Adrenal gland (tissue), 19 donors: ENCODE measurements at regions of chr5 and their contacts with region 1.

Region 1: DNA sequence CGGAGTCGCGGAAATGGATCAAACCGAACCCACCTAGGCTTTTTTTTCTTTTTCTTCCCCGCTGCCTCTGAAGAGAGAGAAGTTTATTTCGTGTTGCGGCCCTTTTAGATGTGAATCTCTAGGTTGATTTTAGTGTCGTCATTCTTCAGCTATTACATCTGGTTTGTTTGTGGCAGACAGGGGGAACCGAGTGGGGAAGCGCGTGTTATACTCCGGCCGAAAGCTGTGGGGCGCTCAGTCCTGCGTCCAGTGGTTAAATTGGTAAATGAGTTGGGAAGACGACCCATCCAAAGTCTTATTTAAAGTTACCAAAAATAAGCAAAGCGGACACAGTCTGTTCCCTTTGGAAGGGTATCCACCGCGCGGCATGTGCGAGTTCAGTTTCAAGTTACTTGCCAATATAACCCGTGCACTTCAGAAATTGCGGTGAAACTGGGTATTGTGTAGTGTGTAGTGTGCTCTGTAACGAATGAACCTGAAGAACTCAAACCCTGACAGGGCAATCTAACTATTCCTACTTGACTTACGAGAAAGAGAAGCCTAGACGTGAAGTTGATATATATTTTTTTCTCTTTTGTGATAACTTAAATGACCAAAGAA is 1.3 kb downstream of the MAN2A1 start:
- DNase-seq: peak; percentile 79 to 92 (median 84)
- H3K4me3 ChIP-seq: peak overlapping the region; percentile 30 to 97 (median 56)
- H3K27ac ChIP-seq: peak overlapping the region; percentile 37 to 98 (median 94)
- H3K4me1 ChIP-seq: peaks cover 37 to 47% of the 10 kb centered on the region in 2 donors
- H3K27me3 ChIP-seq: no peaks in the 10 kb centered on the region
- CTCF ChIP-seq: peak; percentile 61 to 89 (median 77)
- POLR2A ChIP-seq: peak in 1 of 2 donors; percentile 52

Region 2: GRCh38 chr5:109619606-109620005 is 71.5 kb before region 1 on chr5:
- intact Hi-C with region 1: no loop called
- DNase-seq: no peak
- H3K4me3 ChIP-seq: no peak overlapping the region
- H3K27ac ChIP-seq: no peak overlapping the region
- H3K4me1 ChIP-seq: no peaks in the 10 kb centered on the region
- H3K27me3 ChIP-seq: no peaks in the 10 kb centered on the region
- CTCF ChIP-seq: no peak
- POLR2A ChIP-seq: no peak

Region 3: GRCh38 chr5:109865637-109866036 is 174.6 kb after region 1 on chr5:
- intact Hi-C with region 1: loop called in 1 of 2 experiments (anchors 10 kb)
- DNase-seq: peak; percentile 81 to 96 (median 94)
- H3K4me3 ChIP-seq: no peak overlapping the region
- H3K27ac ChIP-seq: peak overlapping the region; percentile 69 to 86 (median 80)
- H3K4me1 ChIP-seq: peaks cover 10 to 22% of the 10 kb centered on the region in 2 donors
- H3K27me3 ChIP-seq: no peaks in the 10 kb centered on the region
- CTCF ChIP-seq: no peak
- POLR2A ChIP-seq: peak in 1 of 2 donors; percentile 68